Activated naive CD4-positive, alpha-beta T cell treated with anti-CD3 and anti-CD28 coated beads, Interleukin-2, amount 10 ng/mL, durations not matched to agents 7 days and 5 days (primary cell): ENCODE measurements at regions of chr18 and their contacts with region 1.

Region 1: GRCh38 chr18:3245853-3246634 is 1.6 kb upstream of the MYL12A start:
- DNase-seq: peak; percentile 87
- H3K4me3 Mint-ChIP-seq: peak overlapping the region; percentile 88
- H3K27ac Mint-ChIP-seq: peak overlapping the region; percentile 99
- H3K4me1 Mint-ChIP-seq: peaks cover 28% of the 10 kb centered on the region
- H3K27me3 Mint-ChIP-seq: peaks cover 7% of the 10 kb centered on the region

Region 2: DNA sequence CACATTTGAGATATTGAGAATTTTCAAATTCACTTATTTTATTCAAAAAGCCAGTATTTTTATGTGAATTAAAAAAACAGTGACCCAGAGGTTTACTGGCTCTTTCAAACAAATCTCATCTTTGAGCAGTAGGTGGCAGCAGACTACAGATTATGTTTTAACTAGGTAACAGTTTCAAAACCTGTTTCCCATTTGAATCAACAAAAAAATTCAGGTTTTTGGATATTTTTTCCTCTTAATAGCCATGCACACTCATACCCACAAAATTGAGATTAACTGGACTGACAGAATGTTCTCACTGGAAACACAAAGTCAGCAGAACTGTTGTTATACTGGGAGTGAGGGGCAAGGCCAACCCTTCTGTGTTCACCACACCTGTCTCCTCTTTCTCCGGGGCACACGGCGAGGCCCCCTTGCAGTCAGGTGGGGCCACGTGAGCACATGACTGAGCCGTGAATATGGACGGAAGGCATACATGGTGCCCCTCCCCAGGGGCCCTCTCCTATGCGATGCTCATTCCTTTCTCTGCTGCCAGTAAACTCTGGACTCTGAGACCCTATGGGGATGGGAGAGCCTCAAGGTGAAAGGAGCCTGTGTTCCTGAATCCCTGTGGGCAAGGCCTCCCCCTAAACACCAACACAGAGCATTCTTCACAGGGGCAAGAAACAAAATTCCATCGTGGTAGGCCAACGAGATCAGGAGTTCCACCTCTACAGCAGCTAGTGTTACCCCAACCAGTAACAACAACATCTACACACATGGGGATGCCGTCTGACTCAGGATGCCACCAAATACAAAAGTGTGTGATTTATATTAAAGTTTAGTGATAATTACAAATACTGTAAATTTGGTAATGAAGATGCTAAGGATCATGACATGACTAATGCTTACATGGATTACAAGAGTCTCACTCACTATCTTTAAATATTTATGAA is 313.5 kb before region 1 on chr18:
- CTCF ChIA-PET with region 1: interaction called, 27 read pairs
- DNase-seq: peak; percentile 54
- H3K4me3 Mint-ChIP-seq: no peak overlapping the region
- H3K27ac Mint-ChIP-seq: peak overlapping the region; percentile 57
- H3K4me1 Mint-ChIP-seq: peaks cover 23% of the 10 kb centered on the region
- H3K27me3 Mint-ChIP-seq: no peaks in the 10 kb centered on the region

Region 3: DNA sequence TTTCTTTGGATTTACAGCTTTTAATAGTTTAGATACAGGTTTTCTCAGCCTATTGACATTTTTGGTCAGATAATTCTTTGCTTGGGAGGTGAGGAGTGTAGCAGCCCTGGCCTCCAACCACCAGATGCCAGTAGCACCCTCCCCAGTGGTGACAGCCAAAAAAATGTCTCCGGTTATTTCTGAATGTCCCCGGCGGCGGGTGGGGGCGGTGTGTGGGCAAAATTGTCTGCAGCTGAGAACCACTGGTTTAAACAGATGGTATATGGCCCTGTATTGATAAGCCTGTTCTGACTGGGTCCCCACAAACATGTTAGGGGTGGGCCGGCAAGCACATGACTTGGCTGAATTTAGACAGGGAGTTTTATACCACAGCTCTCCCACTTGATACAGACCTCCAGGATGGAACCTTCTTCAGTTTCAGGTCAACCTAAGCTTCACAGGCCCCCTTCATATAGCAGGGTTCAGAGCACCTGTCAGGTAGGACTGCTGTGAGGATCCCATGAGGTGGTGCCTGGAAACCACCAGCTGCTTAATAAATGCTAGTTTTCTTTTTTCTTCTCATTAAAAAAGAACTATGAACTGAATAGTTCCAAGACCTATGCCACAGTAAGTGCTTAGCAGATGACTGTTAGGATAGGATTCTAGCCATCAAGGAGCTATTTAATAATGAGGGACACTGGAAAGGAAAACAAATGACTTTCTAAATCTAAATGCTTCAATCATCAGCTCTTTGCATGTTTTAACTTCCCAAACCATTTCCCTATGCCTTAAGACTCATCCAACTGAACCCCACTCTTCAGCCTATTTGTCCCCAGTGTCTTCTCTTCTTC is 251.2 kb before region 1 on chr18:
- CTCF ChIA-PET with region 1: interaction called, 43 read pairs
- DNase-seq: peak; percentile 82
- H3K4me3 Mint-ChIP-seq: no peak overlapping the region
- H3K27ac Mint-ChIP-seq: peak overlapping the region; percentile 6
- H3K4me1 Mint-ChIP-seq: peaks cover 78% of the 10 kb centered on the region
- H3K27me3 Mint-ChIP-seq: no peaks in the 10 kb centered on the region

Region 4: GRCh38 chr18:3151399-3152264 is 94.4 kb before region 1 on chr18:
- CTCF ChIA-PET with region 1: interaction called, 46 read pairs
- DNase-seq: no peak
- H3K4me3 Mint-ChIP-seq: no peak overlapping the region
- H3K27ac Mint-ChIP-seq: no peak overlapping the region
- H3K4me1 Mint-ChIP-seq: peaks cover 6% of the 10 kb centered on the region
- H3K27me3 Mint-ChIP-seq: peaks cover 7% of the 10 kb centered on the region

Region 5: GRCh38 chr18:3262247-3263131 is 16.4 kb after region 1 on chr18:
- CTCF ChIA-PET with region 1: interaction called, 11 read pairs
- DNase-seq: peak; percentile 58
- H3K4me3 Mint-ChIP-seq: peak overlapping the region; percentile 91
- H3K27ac Mint-ChIP-seq: peak overlapping the region; percentile 99
- H3K4me1 Mint-ChIP-seq: peaks cover 85% of the 10 kb centered on the region
- H3K27me3 Mint-ChIP-seq: no peaks in the 10 kb centered on the region

Region 6: DNA sequence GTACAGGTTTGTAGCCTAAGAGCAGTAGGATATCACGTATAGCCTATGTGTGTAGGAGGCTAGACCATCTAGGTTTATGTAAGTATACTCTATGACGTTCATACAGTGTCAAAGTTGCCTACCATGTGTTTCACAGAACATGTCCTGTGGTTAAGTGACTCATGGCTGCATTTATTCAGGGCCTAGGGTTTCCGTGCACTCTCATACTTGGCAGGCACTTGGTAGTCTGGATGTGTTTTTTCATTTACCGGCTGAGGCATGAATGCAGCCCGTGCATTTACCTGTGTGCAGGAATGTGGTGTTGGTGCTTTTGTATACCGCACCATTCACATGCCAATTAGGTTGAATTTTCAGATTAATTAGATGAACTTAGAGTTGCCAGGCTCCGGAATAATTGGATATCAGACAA is 59.3 kb after region 1 on chr18:
- CTCF ChIA-PET with region 1: no interaction called
- DNase-seq: peak; percentile 29
- H3K4me3 Mint-ChIP-seq: no peak overlapping the region
- H3K27ac Mint-ChIP-seq: no peak overlapping the region
- H3K4me1 Mint-ChIP-seq: peaks cover 12% of the 10 kb centered on the region
- H3K27me3 Mint-ChIP-seq: peaks cover 25% of the 10 kb centered on the region

Region 7: GRCh38 chr18:3472681-3473544 is 226.9 kb after region 1 on chr18:
- CTCF ChIA-PET with region 1: no interaction called
- DNase-seq: no peak
- H3K4me3 Mint-ChIP-seq: no peak overlapping the region
- H3K27ac Mint-ChIP-seq: no peak overlapping the region
- H3K4me1 Mint-ChIP-seq: peaks cover 11% of the 10 kb centered on the region
- H3K27me3 Mint-ChIP-seq: no peaks in the 10 kb centered on the region

Region 8: GRCh38 chr18:3511922-3512372 is 265.9 kb after region 1 on chr18:
- CTCF ChIA-PET with region 1: no interaction called
- DNase-seq: no peak
- H3K4me3 Mint-ChIP-seq: no peak overlapping the region
- H3K27ac Mint-ChIP-seq: no peak overlapping the region
- H3K4me1 Mint-ChIP-seq: no peaks in the 10 kb centered on the region
- H3K27me3 Mint-ChIP-seq: peaks cover 8% of the 10 kb centered on the region

Region 9: GRCh38 chr18:3554091-3554601 is 308.1 kb after region 1 on chr18:
- CTCF ChIA-PET with region 1: no interaction called
- DNase-seq: no peak
- H3K4me3 Mint-ChIP-seq: no peak overlapping the region
- H3K27ac Mint-ChIP-seq: no peak overlapping the region
- H3K4me1 Mint-ChIP-seq: no peaks in the 10 kb centered on the region
- H3K27me3 Mint-ChIP-seq: no peaks in the 10 kb centered on the region